Left ventricle myocardium superior (tissue), 1 donor: ENCODE measurements at regions of chr10 and their contacts with region 1.

Region 1: GRCh38 chr10:69644658-69645295 is 14.7 kb downstream of the FAM241B start:
- DNase-seq: peak; percentile 66
- ATAC-seq: peak; percentile 72

Region 2: GRCh38 chr10:69800109-69800508 is 155.3 kb after region 1 on chr10:
- intact Hi-C with region 1: loop called (anchors 5 kb)
- DNase-seq: no peak
- ATAC-seq: peak; percentile 48

Region 3: DNA sequence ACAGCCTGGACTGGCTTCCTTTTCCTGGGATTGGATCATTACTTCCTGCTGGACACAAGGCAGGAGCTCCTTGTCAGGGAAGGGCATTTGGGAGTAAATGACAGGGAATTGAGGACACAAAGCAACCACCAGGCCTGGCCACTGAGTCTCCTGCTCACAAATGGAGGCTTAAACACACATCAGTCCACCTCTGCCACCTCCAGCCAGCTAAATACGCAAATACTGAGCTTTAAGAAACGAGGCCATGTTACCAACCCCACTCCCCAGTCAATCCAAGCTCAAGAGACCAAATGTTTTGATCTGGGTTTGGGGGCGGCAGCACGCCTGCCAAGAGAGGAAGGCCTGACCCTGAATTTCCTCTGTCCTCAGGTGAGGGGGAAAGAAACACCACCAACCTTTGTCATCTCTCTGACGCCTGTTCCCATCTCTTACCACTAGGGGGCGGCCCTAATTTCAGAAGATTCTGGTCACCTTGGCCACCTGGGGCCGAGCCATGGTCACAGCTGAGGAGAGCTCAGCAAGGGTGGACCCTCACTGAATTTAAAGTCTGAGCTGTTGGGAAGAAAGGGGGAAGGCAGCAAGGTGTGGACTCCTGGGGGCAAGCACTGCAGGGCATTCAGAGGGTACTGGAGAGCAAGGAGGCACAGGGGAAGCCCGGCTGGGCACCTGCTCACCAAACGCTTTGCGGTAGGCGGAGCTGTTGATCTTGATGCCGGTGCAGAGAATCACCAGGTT is 471.3 kb after region 1 on chr10:
- intact Hi-C with region 1: no loop called
- DNase-seq: peak; percentile 47
- ATAC-seq: peak; percentile 58